ENCODE measurements at regions of chr9 and their contacts with region 1.

Region 1: DNA sequence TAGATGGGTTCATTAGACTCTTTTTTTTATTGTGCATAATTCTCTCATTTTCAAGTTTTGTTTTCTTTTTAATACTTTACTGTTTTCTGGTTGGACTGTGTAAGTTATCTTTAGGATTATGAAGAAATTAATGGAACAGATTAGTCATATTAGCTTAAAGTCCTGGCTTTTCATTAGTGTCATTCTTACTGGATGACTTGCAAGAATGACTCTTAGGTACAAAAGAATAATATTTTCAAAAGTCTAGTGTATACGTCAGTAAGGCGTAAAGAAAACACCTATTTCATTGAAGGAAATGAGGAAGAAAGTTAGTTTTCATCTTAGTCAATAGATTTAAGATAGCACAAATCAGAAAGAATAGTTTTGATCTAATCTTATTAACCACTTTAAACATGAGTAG is 20.4 kb downstream of the UHRF2 start:
- DNase-seq: peak; percentile 76
- ATAC-seq: peak; percentile 40; the same call in 1 of the 2 replicates
- H3K4me3 ChIP-seq: no peak overlapping the region
- H3K27ac ChIP-seq: no peak overlapping the region
- H3K4me1 ChIP-seq: peaks cover 8% of the 10 kb centered on the region
- H3K27me3 ChIP-seq: no peaks in the 10 kb centered on the region
- CTCF ChIP-seq: no peak
- POLR2A ChIP-seq: no peak
- RAD21 ChIP-seq: no peak

Region 2: DNA sequence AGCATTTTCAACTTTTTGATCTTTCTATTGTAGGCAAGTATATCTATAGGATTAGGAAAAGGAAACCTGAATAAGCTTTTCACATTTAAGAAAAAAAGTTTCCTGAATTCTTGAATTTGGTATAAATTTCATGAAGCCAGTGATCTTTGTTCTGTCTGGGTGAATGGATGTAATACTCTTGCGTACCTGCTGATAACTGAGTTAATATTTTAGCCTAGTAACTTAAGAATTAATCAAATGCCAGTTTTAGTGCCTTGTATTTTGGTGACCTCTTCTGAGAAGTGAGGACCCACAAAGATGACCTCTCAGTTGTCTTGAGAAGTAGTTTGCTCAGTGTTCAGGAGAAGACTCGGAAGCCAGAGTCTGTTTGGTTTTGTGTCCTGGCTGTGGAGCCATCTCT is 57.5 kb after region 1 on chr9:
- CTCF ChIA-PET with region 1: no interaction called
- POLR2A ChIA-PET with region 1: no interaction called
- dilution Hi-C with region 1: no loop called
- in situ Hi-C with region 1: loop called (anchors 10 kb)
- intact Hi-C with region 1: loop called (anchors 5 kb)
- DNase-seq: no peak
- ATAC-seq: no peak
- H3K4me3 ChIP-seq: no peak overlapping the region
- H3K27ac ChIP-seq: no peak overlapping the region
- H3K4me1 ChIP-seq: no peaks in the 10 kb centered on the region
- H3K27me3 ChIP-seq: no peaks in the 10 kb centered on the region
- CTCF ChIP-seq: no peak
- POLR2A ChIP-seq: no peak
- RAD21 ChIP-seq: no peak

Region 3: GRCh38 chr9:6498982-6499381 is 65.6 kb after region 1 on chr9:
- CTCF ChIA-PET with region 1: no interaction called
- POLR2A ChIA-PET with region 1: no interaction called
- dilution Hi-C with region 1: no loop called
- in situ Hi-C with region 1: loop called (anchors 10 kb)
- intact Hi-C with region 1: loop called (anchors 5 kb)
- DNase-seq: peak; percentile 85
- ATAC-seq: peak; percentile 87
- H3K4me3 ChIP-seq: no peak overlapping the region
- H3K27ac ChIP-seq: 0 out of 2 replicates have a peak overlapping the region, but pooled peaks have one; percentile 3
- H3K4me1 ChIP-seq: peaks cover 5% of the 10 kb centered on the region
- H3K27me3 ChIP-seq: no peaks in the 10 kb centered on the region
- CTCF ChIP-seq: no peak
- POLR2A ChIP-seq: no peak
- RAD21 ChIP-seq: no peak

Measured in IMR-90 (cell line).